ENCODE measurements at regions of chr3 and their contacts with region 1.

Region 1: DNA sequence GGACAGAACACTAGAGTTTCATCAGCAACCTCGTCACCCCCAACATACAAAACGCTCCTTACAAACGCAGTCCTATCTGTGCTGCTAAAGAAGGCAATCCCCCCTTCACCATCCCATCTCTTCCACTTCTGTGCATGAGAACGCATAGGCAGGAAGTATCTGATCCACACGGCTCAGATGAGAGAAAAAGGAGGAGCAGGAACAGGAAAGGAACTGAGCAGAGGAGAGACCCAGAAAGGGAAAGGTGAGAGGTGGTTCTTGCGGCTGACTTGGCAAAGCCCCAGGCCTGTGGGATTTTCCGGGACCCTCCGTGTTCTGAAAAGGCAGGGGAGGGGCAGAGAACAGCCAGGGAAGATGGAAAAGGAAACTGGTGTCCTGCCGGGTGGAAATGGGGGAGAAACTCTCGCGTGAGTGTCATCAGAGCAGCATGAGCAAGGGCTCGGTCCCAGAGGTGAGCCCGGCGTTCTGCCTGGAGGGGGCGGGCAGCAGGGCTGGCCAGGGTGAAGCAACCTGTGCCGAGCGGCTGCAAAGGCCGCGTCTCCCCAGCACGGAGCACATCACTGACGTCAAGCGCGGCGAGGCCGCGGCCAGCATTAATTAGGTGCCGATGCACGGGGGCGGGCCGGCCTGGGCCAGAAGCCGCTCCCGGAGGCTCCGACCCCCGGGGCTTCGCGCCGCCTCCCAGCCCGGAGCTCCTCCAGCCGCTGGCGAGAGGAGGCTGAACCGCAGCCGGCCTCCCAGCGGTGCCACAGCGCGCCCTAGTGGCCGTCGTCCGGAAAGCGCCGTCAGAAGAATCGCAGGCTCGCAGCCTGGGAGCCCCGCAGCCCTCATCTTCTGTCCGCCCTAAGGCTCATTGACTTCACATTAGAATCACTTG is 35.8 kb downstream of the CPN2 start:
- DNase-seq: peak; percentile 74 to 81 (median 77)
- H3K4me3 ChIP-seq: peak overlapping the region; percentile 61 to 62
- H3K4me3 Mint-ChIP-seq: peak overlapping the region; percentile 64 to 90 (median 83)
- H3K27ac ChIP-seq: no peak overlapping the region
- H3K27ac Mint-ChIP-seq: peak overlapping the region in 6 of 7 donors; percentile 13 to 80 (median 54)
- H3K4me1 ChIP-seq: peaks cover 13% of the 10 kb centered on the region
- H3K4me1 Mint-ChIP-seq: peaks cover 5 to 10% (median 8%) of the 10 kb centered on the region in 4 donors
- H3K27me3 ChIP-seq: no peaks in the 10 kb centered on the region
- H3K27me3 Mint-ChIP-seq: peaks cover 5 to 12% of the 10 kb centered on the region in 2 donors

Region 2: GRCh38 chr3:192566706-192567290 is 1748.5 kb before region 1 on chr3:
- CTCF ChIA-PET with region 1: no interaction called
- POLR2A ChIA-PET with region 1: no interaction called
- intact Hi-C with region 1: loop called (anchors 5 kb)
- DNase-seq: peak; percentile 39 to 54 (median 46)
- H3K4me3 ChIP-seq: no peak overlapping the region
- H3K4me3 Mint-ChIP-seq: no peak overlapping the region
- H3K27ac ChIP-seq: no peak overlapping the region
- H3K27ac Mint-ChIP-seq: no peak overlapping the region
- H3K4me1 ChIP-seq: no peaks in the 10 kb centered on the region
- H3K4me1 Mint-ChIP-seq: peaks cover 0 to 9% (median 3%) of the 10 kb centered on the region in 4 donors
- H3K27me3 ChIP-seq: no peaks in the 10 kb centered on the region
- H3K27me3 Mint-ChIP-seq: peaks cover 2% of the 10 kb centered on the region in 2 donors

Region 3: DNA sequence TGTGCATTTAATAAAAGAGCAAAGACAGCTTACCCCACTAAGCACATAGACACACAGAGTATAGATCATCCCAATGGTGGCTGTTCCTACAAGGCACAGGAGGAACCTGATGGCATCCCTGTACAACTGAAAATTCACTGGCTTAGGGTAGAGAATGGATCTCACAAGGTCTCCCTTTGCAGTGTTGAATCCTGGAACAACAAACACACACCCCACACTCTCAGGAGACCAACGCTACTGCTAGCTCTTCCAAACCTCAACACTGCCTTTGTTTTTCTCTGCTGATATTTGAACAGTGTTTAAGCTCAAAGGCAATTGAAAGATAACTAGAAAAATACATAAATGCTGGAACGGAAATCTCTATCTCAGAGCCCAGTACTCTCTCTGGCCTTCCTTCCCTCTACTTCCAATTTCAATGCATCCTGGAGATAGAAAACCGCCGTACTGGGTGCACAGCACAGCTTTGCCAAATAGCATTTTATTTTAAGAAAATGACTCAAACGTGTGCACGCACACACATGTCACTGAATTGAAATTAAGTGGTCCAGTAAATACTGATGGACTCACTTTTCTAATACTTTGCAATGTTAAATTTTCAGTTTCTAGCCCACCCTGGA is 849.2 kb before region 1 on chr3:
- CTCF ChIA-PET with region 1: interaction called, 5 read pairs
- POLR2A ChIA-PET with region 1: no interaction called
- intact Hi-C with region 1: loop called (anchors 10 kb)
- DNase-seq: no peak
- H3K4me3 ChIP-seq: no peak overlapping the region
- H3K4me3 Mint-ChIP-seq: no peak overlapping the region
- H3K27ac ChIP-seq: no peak overlapping the region
- H3K27ac Mint-ChIP-seq: no peak overlapping the region
- H3K4me1 ChIP-seq: no peaks in the 10 kb centered on the region
- H3K4me1 Mint-ChIP-seq: peaks cover 2 to 7% (median 4%) of the 10 kb centered on the region in 4 donors
- H3K27me3 ChIP-seq: no peaks in the 10 kb centered on the region
- H3K27me3 Mint-ChIP-seq: peaks cover 4 to 5% of the 10 kb centered on the region in 2 donors

Region 4: GRCh38 chr3:193673845-193674244 is 641.5 kb before region 1 on chr3:
- CTCF ChIA-PET with region 1: interaction called, 135 read pairs
- POLR2A ChIA-PET with region 1: no interaction called
- intact Hi-C with region 1: no loop called
- DNase-seq: no peak
- H3K4me3 ChIP-seq: no peak overlapping the region
- H3K4me3 Mint-ChIP-seq: no peak overlapping the region
- H3K27ac ChIP-seq: no peak overlapping the region
- H3K27ac Mint-ChIP-seq: no peak overlapping the region
- H3K4me1 ChIP-seq: no peaks in the 10 kb centered on the region
- H3K4me1 Mint-ChIP-seq: peaks cover 0 to 4% (median 1%) of the 10 kb centered on the region in 4 donors
- H3K27me3 ChIP-seq: no peaks in the 10 kb centered on the region
- H3K27me3 Mint-ChIP-seq: no peaks in the 10 kb centered on the region

Region 5: DNA sequence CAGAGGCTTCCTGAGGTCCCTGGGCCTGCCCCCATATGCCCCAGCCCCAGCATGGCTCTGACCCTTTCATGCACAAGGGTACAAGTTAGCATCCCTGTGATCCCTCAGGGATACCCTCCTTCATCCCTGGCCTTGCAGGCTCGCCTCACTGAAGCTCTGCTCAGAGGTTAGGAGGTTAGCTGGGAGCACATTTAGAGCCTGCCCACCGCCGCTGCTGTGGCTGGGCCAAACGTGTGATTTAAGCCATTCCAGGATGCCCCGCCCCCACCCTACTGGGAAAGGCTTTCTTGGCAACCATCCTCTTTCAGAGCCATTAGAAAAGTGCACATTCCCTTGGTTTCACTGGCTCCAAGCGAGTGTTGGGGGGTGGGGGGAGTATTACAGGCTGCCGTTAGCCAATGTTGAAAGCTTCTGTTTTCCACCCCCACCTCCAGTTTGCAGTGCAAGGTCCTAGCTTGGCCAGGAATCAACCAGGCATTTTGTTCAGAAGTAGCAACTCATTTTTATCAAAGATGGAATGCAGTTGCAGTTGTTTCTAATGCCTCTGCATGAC is 185.7 kb before region 1 on chr3:
- CTCF ChIA-PET with region 1: interaction called, 5 read pairs
- POLR2A ChIA-PET with region 1: no interaction called
- intact Hi-C with region 1: loop called (anchors 2 kb)
- DNase-seq: no peak
- H3K4me3 ChIP-seq: no peak overlapping the region
- H3K4me3 Mint-ChIP-seq: no peak overlapping the region
- H3K27ac ChIP-seq: no peak overlapping the region
- H3K27ac Mint-ChIP-seq: no peak overlapping the region
- H3K4me1 ChIP-seq: peaks cover 18% of the 10 kb centered on the region
- H3K4me1 Mint-ChIP-seq: peaks cover 11 to 32% (median 16%) of the 10 kb centered on the region in 4 donors
- H3K27me3 ChIP-seq: no peaks in the 10 kb centered on the region
- H3K27me3 Mint-ChIP-seq: peaks cover 45 to 60% of the 10 kb centered on the region in 2 donors

Region 6: GRCh38 chr3:194405766-194406165 is 90.4 kb after region 1 on chr3:
- CTCF ChIA-PET with region 1: no interaction called
- POLR2A ChIA-PET with region 1: no interaction called
- intact Hi-C with region 1: no loop called
- DNase-seq: no peak
- H3K4me3 ChIP-seq: no peak overlapping the region
- H3K4me3 Mint-ChIP-seq: no peak overlapping the region
- H3K27ac ChIP-seq: no peak overlapping the region
- H3K27ac Mint-ChIP-seq: peak overlapping the region in 1 of 7 donors; percentile 36
- H3K4me1 ChIP-seq: peaks cover 5% of the 10 kb centered on the region
- H3K4me1 Mint-ChIP-seq: peaks cover 0 to 7% (median 4%) of the 10 kb centered on the region in 4 donors
- H3K27me3 ChIP-seq: no peaks in the 10 kb centered on the region
- H3K27me3 Mint-ChIP-seq: no peaks in the 10 kb centered on the region

Region 7: DNA sequence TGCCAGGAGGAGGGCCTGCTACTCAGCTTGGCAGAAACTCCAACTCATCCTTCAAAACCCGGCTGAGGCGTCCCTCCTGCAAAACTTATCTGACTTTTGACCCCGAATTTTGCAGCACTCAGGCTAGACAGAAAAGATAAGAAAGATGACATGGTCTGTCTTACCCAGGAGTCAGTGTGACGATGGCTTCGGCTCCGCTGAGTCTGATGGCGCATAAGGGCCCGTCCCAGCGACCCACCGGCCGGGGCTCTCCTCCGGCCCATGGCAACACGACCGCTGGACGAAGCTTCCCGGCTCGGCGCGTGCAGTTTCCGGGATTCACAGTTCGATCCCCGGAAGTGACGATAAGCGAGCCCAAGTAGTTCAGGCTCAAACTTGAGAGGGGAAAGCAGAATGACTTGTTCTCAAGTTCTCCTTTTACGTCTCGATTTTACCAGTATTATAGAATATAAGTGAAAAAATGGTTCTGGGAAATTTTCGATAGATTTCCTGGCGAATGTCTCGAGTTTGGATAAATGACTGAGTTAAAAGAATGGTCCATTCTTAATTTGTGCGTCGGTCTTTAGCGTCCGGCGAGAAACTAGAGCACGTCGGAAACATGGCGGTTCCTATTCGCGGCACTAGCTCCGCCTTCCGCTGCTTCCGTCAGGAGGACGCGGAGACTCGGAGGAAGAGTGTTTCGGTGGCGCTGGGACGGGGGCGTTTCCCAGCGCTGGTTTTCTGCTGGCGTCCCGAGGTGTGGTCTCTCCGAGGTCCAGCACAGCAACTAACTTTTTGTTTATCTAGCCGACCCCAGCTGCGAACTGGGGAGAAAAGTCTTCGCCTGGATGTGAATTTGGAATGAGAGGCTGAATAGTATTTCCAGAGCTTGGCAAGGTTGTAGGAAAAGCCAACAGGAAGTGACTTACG is 356.8 kb after region 1 on chr3 and contains the start of gene LSG1:
- CTCF ChIA-PET with region 1: no interaction called
- POLR2A ChIA-PET with region 1: no interaction called
- intact Hi-C with region 1: no loop called
- DNase-seq: peak; percentile 87 to 90 (median 89)
- H3K4me3 ChIP-seq: peak within 1 kb of the TSS; percentile 85 to 88
- H3K4me3 Mint-ChIP-seq: peak within 1 kb of the TSS; percentile 97 to 100 (median 99)
- H3K27ac ChIP-seq: peak within 1 kb of the TSS; percentile 95
- H3K27ac Mint-ChIP-seq: peak within 1 kb of the TSS; percentile 98 to 99 (median 99)
- H3K4me1 ChIP-seq: peaks cover 32% of the 10 kb centered on the region
- H3K4me1 Mint-ChIP-seq: peaks cover 26 to 52% (median 38%) of the 10 kb centered on the region in 4 donors
- H3K27me3 ChIP-seq: no peaks in the 10 kb centered on the region
- H3K27me3 Mint-ChIP-seq: peaks cover 0 to 4% of the 10 kb centered on the region in 2 donors
- total RNA-seq, gene LSG1: 48.4 to 49.5 TPM

Measured in CD4-positive, alpha-beta memory T cell (primary cell).